Posterior vena cava (tissue), 2 donors: ENCODE measurements at regions of chr18 and their contacts with region 1.

Region 1: DNA sequence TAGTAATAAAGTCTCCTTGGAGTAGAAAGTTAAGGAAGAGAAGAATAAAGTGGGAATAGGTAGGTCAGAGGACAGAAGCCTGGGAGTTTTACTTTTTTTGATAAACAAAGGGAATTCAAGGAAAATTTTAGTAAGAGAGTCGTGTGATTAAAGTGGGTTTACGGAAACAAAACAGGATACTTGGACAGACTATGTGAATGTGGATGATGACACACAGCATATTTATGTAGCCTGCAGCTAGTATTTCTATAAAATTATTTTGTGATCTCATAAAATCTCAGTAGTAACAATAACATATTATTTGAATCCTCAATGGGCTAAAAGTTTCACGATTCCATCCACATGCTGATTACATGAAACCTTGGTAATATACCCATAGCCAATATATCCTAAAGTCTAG is 450.7 kb upstream of the PIK3C3 start:
- DNase-seq: no peak

Region 2: GRCh38 chr18:41449612-41450011 is 54.7 kb before region 1 on chr18:
- intact Hi-C with region 1: loop called in 1 of 2 experiments (anchors 5 kb)
- DNase-seq: no peak

Region 3: GRCh38 chr18:41484069-41484468 is 20.2 kb before region 1 on chr18:
- intact Hi-C with region 1: no loop called
- DNase-seq: no peak

Region 4: DNA sequence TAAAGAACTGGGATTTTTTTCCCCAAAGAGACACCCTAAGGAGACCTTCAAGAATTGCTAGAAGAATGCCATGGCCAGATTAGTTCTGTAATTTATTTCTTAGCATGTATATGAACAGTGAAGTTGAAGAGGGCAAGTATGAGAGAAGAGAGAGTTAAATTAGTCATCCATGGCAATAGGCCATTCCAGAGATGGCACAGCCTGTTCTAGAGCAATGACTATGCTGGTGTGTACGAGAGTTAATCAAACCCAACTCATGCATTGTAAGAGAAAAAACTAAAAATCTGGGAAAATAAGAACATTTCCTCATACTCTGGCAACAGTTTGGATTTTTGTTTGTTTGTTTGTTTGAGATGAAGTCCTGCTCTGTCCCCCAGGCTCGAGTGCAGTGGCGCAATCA is 338.6 kb after region 1 on chr18:
- intact Hi-C with region 1: no loop called
- DNase-seq: no peak

Region 5: DNA sequence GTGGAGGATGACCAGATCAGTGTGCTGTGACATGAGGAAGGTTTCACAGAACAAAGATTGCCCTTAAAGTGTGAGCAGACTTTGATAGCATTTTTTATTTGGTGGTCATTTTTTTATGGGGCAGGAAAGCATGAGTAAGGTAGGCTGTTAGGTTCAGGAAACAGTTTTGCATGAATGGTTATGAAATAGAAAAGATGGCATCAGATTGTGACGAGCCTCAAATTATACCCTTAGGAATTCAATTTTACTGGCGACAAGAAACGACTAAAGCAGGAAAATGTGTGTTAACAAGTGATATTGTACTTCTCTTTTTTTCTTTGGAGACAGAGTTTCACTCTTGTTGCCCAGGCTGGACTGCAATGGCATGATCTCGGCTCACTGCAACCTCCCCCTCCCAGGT is 495.4 kb after region 1 on chr18:
- intact Hi-C with region 1: no loop called
- DNase-seq: no peak

Region 6: DNA sequence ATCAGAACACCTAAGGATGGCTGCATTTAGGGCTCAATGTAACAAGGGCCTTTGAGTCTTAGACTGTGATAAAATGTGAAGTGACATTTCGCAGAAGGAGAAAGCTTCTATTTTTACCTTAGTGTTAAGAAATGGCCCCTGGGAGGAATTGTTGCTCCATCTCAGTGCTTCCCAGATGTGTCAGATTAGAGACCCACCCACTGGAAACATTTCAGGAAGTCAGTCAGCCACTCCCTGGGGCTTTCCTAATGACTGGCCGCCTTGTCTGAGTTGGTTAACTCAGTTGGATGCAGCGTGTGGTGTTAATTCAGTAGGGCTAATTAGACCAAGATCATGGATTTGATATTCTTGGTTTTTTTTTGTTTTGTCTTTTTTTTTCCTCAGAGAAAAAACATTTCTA is 806.6 kb after region 1 on chr18:
- intact Hi-C with region 1: no loop called
- DNase-seq: no peak